WTC11 (cell line): ENCODE measurements at regions of chr14 and their contacts with region 1.

Region 1: GRCh38 chr14:72975776-72976175 is 49.5 kb downstream of the DCAF4 start:
- DNase-seq: no peak
- ATAC-seq: 0 out of 2 replicates have a peak, but pooled peaks have one; percentile 32
- H3K4me3 Mint-ChIP-seq: no peak overlapping the region
- H3K27ac Mint-ChIP-seq: no peak overlapping the region; the same call in 1 of the 2 replicates
- H3K4me1 Mint-ChIP-seq: peaks cover 18% of the 10 kb centered on the region
- H3K27me3 Mint-ChIP-seq: no peaks in the 10 kb centered on the region
- CTCF ChIP-seq: no peak

Region 2: GRCh38 chr14:72948481-72949138 is 27.2 kb before region 1 on chr14:
- CTCF ChIA-PET with region 1: interaction called, 10 read pairs
- POLR2A ChIA-PET with region 1: no interaction called
- DNase-seq: peak; percentile 82
- ATAC-seq: peak; percentile 51
- H3K4me3 Mint-ChIP-seq: no peak overlapping the region
- H3K27ac Mint-ChIP-seq: no peak overlapping the region
- H3K4me1 Mint-ChIP-seq: no peaks in the 10 kb centered on the region
- H3K27me3 Mint-ChIP-seq: no peaks in the 10 kb centered on the region
- CTCF ChIP-seq: peak; percentile 79